Head of caudate nucleus (tissue), 42 donors: ENCODE measurements at regions of chr15 and their contacts with region 1.

Region 1: GRCh38 chr15:88627463-88627862 is 6.3 kb downstream of the AEN start:
- DNase-seq: no peak

Region 2: GRCh38 chr15:88586401-88587162 is 40.9 kb before region 1 on chr15:
- intact Hi-C with region 1: no loop called
- DNase-seq: no peak

Region 3: DNA sequence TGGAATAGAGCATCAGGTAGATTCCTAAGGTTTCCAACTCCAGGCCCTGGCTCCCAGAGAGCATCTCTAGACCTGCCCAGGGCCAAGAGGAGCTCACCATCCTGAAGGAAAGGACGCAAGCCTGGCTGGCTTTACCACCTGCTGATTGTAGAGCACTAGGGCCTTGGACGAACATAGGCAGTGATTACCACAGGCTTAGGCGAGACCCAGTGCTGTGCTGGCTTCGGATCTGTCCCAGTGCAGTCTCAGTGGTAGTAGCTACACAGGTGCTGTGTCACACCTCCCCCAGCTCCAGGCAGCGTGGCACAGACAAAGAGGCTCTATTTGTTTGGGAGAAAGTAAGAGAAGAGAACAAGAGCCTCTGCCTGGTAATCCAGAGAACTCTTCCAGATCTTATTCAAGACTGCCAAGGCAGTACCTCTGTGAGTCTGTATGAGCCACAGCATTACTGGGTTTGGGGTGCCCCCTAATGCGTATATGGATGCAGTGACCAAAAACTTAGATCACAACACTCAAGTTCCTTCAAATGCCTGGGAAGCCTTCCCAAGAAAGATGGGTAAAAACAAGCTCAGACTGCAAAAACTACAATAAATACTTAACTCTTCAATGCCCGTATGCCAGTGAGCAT is 36.8 kb after region 1 on chr15:
- intact Hi-C with region 1: loop called (anchors 5 kb)
- DNase-seq: peak in 35 of 42 donors; percentile 23 to 85 (median 64)